PC-9 (cell line): ENCODE measurements at regions of chr9 and their contacts with region 1.

Region 1: DNA sequence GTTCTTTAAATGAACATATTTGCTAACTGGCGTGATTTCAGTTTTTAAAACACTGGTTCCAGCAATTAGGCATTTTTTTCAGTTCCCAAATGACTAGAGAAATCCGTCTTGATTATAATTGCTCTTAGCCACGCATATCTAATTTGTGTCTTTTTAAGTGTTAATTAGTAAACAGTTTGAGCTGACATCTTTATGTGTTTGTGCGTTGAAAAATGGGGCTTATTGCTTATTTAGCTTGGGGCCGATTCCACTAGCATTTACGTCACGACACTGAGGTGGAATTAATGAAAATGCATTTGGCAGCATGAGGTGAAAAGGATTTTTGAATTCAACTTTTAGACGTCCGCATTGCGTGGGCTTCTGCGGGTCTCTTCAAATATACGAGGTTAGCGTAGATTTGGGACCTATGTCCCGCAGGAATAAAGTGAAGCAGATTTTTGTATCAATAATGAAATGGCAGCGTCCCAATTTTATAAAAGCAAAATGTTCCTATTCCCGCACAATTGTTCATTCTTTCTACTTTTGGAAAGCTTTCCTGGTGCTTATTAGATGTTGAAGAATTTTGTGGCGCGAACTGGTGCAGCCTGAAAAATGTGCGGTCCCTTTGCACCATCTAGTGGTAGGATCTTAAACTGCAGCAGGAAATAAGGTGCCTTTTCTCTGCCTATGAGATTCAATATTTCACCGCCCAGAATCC is 122.7 kb upstream of the LMX1B start:
- DNase-seq: peak; percentile 50 to 53
- H3K4me3 ChIP-seq: no peak overlapping the region
- H3K27ac ChIP-seq: no peak overlapping the region
- H3K4me1 ChIP-seq: no peaks in the 10 kb centered on the region
- H3K27me3 ChIP-seq: no peaks in the 10 kb centered on the region
- CTCF ChIP-seq: peak; percentile 95

Region 2: DNA sequence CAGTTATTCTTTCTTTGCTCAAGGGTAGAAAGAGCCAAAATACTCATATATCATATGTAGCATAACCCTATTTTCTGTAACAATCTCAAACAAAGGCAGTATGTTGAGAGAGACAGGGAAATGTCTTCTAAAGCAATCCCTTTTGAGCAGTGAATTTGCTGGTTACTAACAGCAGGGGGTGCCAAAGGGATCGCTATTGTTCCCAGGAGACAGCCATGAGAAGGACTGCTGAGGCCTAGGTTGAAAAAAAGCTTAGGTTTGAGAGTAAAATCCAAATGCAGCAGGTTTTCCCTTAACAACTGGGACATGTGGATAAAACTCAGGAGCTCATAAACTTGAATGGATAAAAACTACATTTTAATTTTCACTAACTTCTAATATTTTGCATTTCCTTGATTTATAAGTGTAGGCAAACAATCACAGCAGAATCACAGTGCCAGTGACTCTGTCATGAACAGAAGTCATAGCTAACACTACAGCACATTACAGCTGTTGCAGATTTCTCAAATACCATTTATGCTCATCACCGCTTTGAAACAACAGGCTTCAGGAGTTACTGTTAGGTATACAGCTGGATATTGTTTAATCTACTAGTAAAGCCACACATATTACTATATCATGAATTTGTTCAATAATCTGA is 932.4 kb before region 1 on chr9:
- CTCF ChIA-PET with region 1: no interaction called
- POLR2A ChIA-PET with region 1: no interaction called
- intact Hi-C with region 1: loop called (anchors 2 kb)
- DNase-seq: peak; percentile 56 to 57
- H3K4me3 ChIP-seq: no peak overlapping the region
- H3K27ac ChIP-seq: no peak overlapping the region
- H3K4me1 ChIP-seq: no peaks in the 10 kb centered on the region
- H3K27me3 ChIP-seq: no peaks in the 10 kb centered on the region
- CTCF ChIP-seq: peak; percentile 84

Region 3: DNA sequence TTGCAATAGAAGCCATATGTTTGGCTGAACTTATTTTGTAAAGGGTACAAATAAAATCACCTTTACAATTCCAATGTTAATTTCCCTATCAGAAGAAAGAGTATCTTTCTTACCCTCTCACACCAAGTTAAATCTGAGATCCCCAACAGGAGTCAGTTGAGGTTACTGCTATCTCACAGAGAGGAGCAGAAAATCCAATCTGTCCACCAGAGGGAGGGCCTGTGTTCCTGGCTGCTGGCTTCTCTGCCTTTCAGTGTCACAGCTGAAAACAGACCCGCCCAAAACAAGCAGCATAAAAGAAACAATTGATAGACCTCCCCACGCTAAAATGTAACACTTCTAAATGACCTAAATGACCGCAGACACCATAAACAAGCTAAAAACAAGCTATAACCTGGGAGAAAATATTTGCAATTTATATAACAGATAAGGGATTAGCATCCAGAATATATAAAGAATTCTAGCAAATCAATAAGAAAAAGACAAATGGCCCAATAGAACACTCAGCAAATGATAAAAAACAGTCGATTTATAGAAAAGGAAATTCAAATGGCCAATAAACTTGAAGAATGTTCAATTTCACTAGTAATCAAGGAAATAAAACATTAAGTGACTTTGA is 188.9 kb before region 1 on chr9:
- CTCF ChIA-PET with region 1: no interaction called
- POLR2A ChIA-PET with region 1: no interaction called
- intact Hi-C with region 1: loop called (anchors 5 kb)
- DNase-seq: peak; percentile 40 to 51
- H3K4me3 ChIP-seq: no peak overlapping the region
- H3K27ac ChIP-seq: no peak overlapping the region
- H3K4me1 ChIP-seq: no peaks in the 10 kb centered on the region
- H3K27me3 ChIP-seq: no peaks in the 10 kb centered on the region
- CTCF ChIP-seq: peak; percentile 78

Region 4: DNA sequence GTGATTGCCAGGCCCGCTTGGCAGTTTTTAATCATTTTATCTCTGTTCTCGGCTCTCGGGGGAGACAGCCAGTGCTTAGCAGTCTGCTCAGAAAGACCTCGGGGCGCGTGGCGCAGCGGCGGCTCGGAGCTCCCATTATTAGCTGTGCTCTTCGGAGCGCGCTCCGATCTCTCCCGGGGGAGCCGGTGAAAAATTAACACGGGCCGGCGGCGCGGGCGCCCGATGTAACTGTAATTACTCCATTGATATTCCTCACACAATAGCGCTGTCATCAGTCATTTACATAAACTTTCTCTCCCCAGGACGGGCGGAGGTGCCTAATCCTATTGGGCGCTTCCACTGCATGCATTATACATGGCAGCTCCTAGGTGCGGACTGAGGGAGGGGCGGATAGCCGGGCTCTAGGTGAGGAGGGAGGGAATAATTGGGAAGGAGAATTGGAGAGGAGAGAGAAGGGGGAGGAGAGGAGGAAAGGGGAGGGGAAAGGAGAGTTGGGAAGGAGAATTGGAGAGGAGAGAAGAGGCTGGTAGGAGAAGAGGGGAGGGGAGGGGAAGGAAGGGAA is 147.6 kb after region 1 on chr9:
- CTCF ChIA-PET with region 1: interaction called, 14 read pairs
- POLR2A ChIA-PET with region 1: no interaction called
- intact Hi-C with region 1: no loop called
- DNase-seq: no peak
- H3K4me3 ChIP-seq: no peak overlapping the region
- H3K27ac ChIP-seq: no peak overlapping the region
- H3K4me1 ChIP-seq: peaks cover under 1% of the 10 kb centered on the region; the same call in 1 of the 2 replicates
- H3K27me3 ChIP-seq: peaks cover 41% of the 10 kb centered on the region
- CTCF ChIP-seq: no peak